ENCODE measurements at regions of chr20 and their contacts with region 1.

Region 1: GRCh38 chr20:46349035-46349741 is 40.9 kb upstream of the CDH22 start:
- DNase-seq: peak; percentile 83
- H3K27ac ChIP-seq: no peak overlapping the region; the same call in 1 of the 2 replicates
- CTCF ChIP-seq: peak; percentile 98

Region 2: DNA sequence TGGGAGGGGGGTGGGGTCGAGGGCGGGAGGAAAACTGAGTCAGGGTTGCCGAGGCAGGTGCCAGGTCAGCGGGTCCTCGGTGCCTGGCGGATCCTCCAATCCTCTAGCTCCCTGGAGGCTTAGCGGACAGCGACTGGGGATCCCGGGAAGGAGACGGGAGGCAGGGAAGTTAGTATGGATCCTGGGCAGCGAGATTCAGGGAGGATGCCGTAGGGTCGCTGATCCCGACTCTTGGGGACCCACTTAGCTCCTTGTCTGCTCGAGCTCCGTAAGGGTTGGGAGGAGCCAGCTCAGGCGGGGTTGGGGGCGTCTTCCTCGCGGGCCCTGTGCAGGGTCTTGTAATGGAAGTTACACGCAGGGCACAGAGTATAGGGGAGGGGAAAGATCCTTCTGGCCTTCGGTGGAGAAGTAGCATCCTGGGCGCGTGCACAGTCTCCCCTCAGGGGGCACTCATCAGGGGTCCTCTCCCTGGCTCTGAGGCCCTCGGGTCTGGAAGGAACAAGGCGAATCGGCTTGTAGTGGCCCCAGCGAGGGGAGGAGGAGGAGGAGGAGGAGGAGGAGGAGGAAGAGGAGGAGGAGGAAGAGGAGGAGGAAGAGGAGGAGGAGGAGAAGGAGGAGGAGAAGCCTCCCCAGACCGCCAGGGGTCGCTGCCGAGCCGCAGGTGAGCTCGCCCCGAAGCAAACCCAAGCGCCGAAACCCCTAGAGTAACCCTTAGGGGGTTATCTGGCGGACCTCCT is 326.6 kb before region 1 on chr20:
- CTCF ChIA-PET with region 1: interaction called, 11 read pairs
- POLR2A ChIA-PET with region 1: no interaction called
- DNase-seq: peak; percentile 65
- H3K27ac ChIP-seq: peak overlapping the region; percentile 59
- CTCF ChIP-seq: peak; percentile 88

Region 3: GRCh38 chr20:46139908-46140482 is 209.2 kb before region 1 on chr20:
- CTCF ChIA-PET with region 1: interaction called, 47 read pairs
- POLR2A ChIA-PET with region 1: no interaction called
- DNase-seq: peak; percentile 84
- H3K27ac ChIP-seq: peak overlapping the region; percentile 89
- CTCF ChIP-seq: no peak

Region 4: DNA sequence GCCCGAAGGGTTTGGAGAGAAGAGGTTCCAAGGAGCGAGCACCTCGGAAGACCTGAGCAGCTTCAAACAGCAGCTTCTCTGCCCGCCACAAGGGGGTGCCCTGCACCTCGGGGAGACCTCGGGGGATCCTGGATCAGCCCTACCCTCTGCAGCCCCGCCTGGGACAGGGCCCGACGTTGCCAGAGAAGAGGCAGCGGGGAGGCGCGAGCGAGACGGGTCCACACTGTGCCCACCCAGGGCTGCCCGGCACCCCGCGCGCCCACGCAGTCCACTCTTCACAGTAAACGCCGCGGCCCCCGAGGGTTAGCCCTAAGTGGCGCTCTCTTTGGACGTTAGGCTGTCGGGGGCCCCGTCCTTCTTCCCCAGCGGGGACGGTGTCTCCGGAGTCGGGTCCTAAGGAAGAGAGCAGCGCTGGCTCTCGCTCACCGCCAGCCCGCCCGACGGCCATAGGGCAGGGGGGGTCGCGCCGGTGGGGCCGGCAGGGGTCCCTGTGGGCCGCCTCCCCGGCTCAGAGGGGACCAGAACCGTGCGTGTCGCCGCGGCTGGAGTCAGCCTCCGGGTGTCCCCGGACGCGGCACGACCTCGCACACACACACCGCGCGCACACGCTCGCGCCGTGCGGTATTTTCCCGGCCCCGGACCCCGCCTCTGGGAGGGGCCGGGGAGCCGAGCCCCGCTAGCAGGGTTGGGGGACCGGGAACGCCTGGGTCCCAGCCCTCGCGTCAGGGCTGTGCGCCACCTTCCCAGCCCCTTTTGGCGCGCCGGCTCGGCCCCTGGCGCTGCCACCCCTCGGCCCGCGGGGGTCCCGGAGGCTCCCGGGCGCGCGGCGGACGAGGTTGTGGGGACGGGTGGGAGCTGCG is 41.8 kb before region 1 on chr20:
- CTCF ChIA-PET with region 1: interaction called, 93 read pairs
- POLR2A ChIA-PET with region 1: no interaction called
- DNase-seq: peak; percentile 87
- H3K27ac ChIP-seq: no peak overlapping the region
- CTCF ChIP-seq: peak; percentile 95

Region 5: GRCh38 chr20:46359233-46359751 is 10.1 kb after region 1 on chr20:
- CTCF ChIA-PET with region 1: interaction called, 13 read pairs
- POLR2A ChIA-PET with region 1: no interaction called
- DNase-seq: no peak
- H3K27ac ChIP-seq: peak overlapping the region; percentile 18
- CTCF ChIP-seq: no peak

Region 6: DNA sequence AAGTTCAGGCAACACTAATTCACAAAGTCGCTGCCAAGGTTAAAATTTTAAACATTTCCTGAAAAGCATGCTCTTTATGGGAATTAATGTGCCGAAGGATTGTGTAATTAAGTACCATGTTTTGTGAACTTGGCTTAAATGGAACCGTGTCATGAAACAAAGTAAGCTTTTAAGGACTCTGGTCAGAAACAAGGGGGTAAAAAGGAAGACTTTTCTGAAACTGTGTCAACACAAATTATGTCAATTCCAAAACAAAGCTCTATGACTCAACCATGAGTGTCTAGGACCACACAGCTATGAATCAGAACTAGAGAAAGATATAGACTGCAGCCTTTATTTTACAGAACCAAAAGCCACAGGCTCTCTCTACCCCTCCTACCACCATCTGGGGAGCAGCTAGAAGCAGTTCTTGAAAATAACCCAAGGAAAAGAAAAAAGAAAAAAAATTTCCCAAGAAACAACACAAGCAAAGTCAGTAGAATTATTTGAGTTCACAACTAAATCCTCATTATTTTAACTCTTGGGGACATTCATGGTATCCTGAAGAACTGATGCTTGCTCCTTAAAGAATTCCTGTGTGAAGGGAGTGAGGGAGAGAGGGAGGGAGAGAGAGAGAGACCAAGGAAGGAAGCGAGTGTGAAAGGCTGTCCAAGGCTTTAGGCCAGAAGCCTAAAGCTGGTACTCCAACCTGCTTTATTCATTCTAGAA is 925.4 kb after region 1 on chr20:
- CTCF ChIA-PET with region 1: no interaction called
- POLR2A ChIA-PET with region 1: no interaction called
- DNase-seq: peak; percentile 97
- H3K27ac ChIP-seq: peak overlapping the region; percentile 86
- CTCF ChIP-seq: no peak